ENCODE measurements at regions of chr7 and their contacts with region 1.

Region 1: DNA sequence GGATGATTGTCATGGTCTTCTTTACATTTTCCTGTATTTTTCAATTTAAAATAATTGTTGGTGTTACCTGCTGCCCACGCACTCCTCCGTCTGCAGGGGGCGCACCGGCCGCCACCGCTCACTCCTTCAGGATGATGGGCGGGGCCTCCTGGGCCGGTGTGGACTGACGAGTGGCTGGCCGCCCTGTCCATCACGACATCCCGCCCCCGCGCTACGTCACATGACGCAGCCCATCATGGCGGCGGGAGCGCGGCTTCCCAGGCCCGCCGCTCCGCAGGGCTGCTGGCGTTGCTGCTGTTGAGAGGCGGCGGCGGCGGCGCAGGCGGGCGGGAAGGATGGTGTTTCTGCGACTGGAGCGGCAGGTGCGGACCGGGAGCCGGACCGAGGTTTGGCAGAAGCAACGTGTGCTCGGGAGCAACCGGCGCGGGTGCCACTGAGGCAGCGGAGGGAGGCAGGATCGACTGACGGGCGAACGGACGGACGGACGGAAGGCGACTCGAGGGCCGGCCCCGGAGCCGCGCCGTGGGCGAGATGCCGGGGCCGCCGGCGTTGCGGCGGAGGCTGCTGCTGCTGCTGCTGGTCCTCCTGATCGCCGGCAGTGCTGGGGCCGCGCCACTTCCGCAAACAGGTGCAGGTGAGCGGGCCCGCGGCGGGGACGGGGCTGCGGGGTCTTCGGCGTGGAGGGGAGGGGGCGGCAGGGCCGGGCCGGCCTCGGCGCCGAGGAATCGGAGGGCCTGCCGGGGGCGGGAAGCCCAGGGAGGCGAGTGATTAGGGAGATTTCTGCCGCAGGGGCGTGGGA is at the start of gene LMTK2:
- DNase-seq: peak; percentile 98
- ATAC-seq: peak; percentile 100
- total RNA-seq, gene LMTK2: 22.5 TPM

Region 2: DNA sequence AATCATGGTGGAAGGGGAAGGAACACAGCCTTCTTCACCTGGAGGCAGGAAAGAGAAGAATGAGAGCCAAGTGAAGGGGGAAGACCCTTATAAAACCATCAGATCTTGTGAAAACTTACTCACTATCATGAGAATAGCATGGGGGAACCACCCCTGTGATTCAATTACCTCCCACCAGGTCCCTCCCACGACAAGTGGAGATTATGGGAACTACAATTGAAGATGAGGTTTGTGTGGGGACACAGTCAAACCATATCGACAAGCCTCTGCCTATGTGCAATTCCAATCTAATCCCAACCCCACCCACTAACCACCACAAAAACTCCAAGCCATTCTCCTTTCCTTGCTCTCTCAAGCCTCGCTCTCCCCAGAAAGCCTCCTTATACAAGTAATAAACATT is 305.7 kb before region 1 on chr7:
- intact Hi-C with region 1: no loop called
- DNase-seq: no peak
- ATAC-seq: no peak

Region 3: GRCh38 chr7:98021588-98022351 is 85.1 kb before region 1 on chr7:
- intact Hi-C with region 1: loop called (anchors 5 kb)
- DNase-seq: peak; percentile 90
- ATAC-seq: peak; percentile 63

Region 4: GRCh38 chr7:98168181-98168905 is 61.5 kb after region 1 on chr7:
- intact Hi-C with region 1: loop called (anchors 1 kb)
- DNase-seq: no peak
- ATAC-seq: peak; percentile 60

Region 5: GRCh38 chr7:98240961-98241674 is 134.3 kb after region 1 on chr7:
- intact Hi-C with region 1: loop called (anchors 10 kb)
- DNase-seq: no peak
- ATAC-seq: no peak

Measured in Right ventricle myocardium inferior (tissue), 1 donor.